Activated CD8-positive, alpha-beta T cell treated with anti-CD3 and anti-CD28 coated beads for 36 hours (primary cell): ENCODE measurements at regions of chr12 and their contacts with region 1.

Region 1: DNA sequence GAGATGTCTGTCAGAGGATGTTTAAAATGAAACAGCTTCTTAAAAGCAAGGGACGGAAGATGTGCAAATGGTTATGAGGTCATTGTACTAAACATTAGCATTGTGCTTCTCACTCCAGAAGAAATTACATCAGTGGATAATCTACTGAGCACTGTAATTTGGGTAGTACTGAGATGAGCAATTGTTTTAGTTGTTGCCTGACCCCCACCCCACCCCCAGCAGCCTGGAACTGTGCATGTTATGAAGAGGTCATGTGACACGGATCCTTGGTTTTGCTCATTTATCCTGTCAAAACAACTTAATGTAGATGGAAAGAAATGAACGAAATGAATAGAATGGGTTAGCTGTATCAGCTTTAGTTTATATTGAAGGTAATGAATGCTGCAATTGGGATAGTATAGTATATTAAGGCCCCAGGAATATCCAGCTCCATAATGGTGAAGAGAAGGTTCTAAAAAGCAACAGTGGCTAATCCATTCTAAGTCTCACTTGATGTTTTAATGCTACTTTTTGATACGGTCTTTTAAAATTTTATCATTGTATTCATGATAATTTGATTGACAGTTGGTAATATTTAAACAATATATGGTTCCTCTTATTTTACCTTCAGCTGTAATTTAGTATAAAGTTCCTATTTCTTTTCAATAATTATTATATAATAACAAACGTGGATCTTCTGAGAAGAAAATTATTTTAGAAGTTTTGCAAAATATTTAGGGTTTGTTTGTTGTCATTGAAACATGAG is 58.5 kb downstream of the WNK1 start:
- DNase-seq: peak; percentile 79
- ATAC-seq: peak; percentile 85
- H3K4me3 Mint-ChIP-seq: peak overlapping the region; percentile 5
- H3K27ac Mint-ChIP-seq: peak overlapping the region; percentile 76
- H3K4me1 Mint-ChIP-seq: peaks cover 67% of the 10 kb centered on the region
- H3K27me3 Mint-ChIP-seq: no peaks in the 10 kb centered on the region
- CTCF ChIP-seq: no peak

Region 2: DNA sequence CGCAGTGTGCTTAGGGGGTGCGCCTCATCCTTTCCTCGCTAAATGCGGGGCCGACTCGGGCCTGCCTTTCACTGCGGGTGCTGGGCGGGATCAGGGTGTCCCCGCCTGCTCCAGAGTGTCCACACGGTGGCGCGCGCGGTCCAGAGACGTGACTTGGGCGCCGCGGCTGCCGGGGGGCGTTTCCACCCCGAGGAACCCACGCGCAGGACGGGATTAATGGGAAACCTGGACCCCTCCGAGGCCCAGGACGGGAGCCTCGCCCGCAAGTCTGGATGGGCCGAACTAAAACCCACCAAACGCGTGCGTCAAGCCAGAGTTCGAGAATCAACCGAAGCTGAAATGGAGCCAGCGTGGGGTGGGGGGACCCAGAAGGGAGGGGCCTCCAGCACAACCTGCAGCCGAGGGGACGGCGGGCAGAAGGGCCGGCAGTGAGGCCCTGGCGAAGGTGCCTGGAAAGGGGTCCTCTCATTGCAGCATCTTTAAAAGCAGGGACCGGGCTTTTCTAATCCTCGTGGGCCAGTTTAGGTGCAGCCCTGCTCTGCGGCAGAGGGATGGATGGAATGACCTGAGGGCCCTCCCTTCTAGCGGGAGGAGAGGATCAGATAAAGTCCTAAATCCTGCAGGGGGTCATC is 240.9 kb before region 1 on chr12:
- CTCF ChIA-PET with region 1: interaction called, 69 read pairs
- POLR2A ChIA-PET with region 1: no interaction called
- intact Hi-C with region 1: loop called (anchors 2 kb)
- DNase-seq: peak; percentile 92
- ATAC-seq: peak; percentile 92
- H3K4me3 Mint-ChIP-seq: peak overlapping the region; percentile 81
- H3K27ac Mint-ChIP-seq: peak overlapping the region; percentile 76
- H3K4me1 Mint-ChIP-seq: peaks cover 66% of the 10 kb centered on the region
- H3K27me3 Mint-ChIP-seq: no peaks in the 10 kb centered on the region
- CTCF ChIP-seq: peak; percentile 90

Region 3: GRCh38 chr12:614411-614970 is 196.4 kb before region 1 on chr12:
- CTCF ChIA-PET with region 1: interaction called, 33 read pairs
- POLR2A ChIA-PET with region 1: interaction called, 3 read pairs
- intact Hi-C with region 1: no loop called
- DNase-seq: peak; percentile 66
- ATAC-seq: peak; percentile 55
- H3K4me3 Mint-ChIP-seq: no peak overlapping the region
- H3K27ac Mint-ChIP-seq: no peak overlapping the region
- H3K4me1 Mint-ChIP-seq: peaks cover 35% of the 10 kb centered on the region
- H3K27me3 Mint-ChIP-seq: no peaks in the 10 kb centered on the region
- CTCF ChIP-seq: peak; percentile 47

Region 4: GRCh38 chr12:761256-761655 is 49.6 kb before region 1 on chr12:
- CTCF ChIA-PET with region 1: interaction called, 51 read pairs
- POLR2A ChIA-PET with region 1: no interaction called
- intact Hi-C with region 1: no loop called
- DNase-seq: no peak
- ATAC-seq: no peak
- H3K4me3 Mint-ChIP-seq: no peak overlapping the region
- H3K27ac Mint-ChIP-seq: no peak overlapping the region
- H3K4me1 Mint-ChIP-seq: peaks cover 68% of the 10 kb centered on the region
- H3K27me3 Mint-ChIP-seq: no peaks in the 10 kb centered on the region
- CTCF ChIP-seq: no peak

Region 5: GRCh38 chr12:770479-770878 is 40.4 kb before region 1 on chr12:
- CTCF ChIA-PET with region 1: interaction called, 17 read pairs
- POLR2A ChIA-PET with region 1: no interaction called
- intact Hi-C with region 1: no loop called
- DNase-seq: no peak
- ATAC-seq: no peak
- H3K4me3 Mint-ChIP-seq: no peak overlapping the region
- H3K27ac Mint-ChIP-seq: no peak overlapping the region
- H3K4me1 Mint-ChIP-seq: peaks cover 71% of the 10 kb centered on the region
- H3K27me3 Mint-ChIP-seq: no peaks in the 10 kb centered on the region
- CTCF ChIP-seq: no peak

Region 6: DNA sequence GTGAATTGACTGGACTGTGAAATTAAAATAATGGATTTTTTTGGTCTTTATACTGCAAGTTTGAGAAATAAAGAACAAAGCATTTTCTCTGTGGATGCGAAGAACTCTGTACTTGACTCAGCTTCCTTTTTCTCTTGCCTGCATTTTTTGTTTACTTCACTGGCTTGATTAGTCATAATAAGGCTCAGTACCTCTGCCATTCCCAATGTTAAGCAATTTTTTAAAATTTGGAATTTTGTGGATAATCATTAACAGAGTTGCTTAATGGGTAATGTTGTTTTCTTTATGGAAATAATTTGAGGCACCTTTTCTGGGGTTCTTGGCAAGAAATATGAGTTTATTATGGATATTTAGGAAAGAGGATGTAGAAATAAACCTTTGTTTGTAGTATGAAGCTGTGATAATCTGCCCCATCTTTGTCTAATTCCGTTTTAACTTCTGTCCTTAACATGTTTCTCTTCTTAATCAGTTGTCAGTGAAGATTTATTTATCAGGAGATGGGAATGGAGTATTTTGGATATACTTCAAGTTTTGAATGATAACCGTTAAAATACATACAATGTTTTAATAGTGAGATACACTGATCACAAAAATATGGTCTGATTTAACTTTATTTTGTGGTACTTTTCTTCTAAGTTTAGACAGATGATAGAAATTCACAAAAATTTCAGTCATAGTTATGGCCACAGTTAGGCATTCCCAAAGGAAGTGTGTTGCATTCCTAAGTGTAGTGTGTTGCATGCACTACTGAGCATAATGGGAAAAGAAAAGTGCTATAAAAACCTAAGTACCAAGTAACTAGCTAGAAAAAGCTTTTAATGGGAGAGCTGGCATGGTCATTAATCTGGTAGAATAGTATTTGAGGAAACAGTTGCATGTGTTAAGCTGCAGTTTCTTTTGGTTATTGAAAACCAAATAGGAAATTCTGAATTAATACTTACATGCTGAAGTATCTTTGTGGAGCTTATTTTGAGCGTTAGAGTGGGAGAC is 30.8 kb before region 1 on chr12:
- CTCF ChIA-PET with region 1: interaction called, 12 read pairs
- POLR2A ChIA-PET with region 1: interaction called, 3 read pairs
- intact Hi-C with region 1: no loop called
- DNase-seq: no peak
- ATAC-seq: peak; percentile 59
- H3K4me3 Mint-ChIP-seq: peak overlapping the region; percentile 63
- H3K27ac Mint-ChIP-seq: peak overlapping the region; percentile 52
- H3K4me1 Mint-ChIP-seq: peaks cover 71% of the 10 kb centered on the region
- H3K27me3 Mint-ChIP-seq: no peaks in the 10 kb centered on the region
- CTCF ChIP-seq: no peak